Activated T-helper 2 cell treated with anti-CD3 and anti-CD28 coated beads, Interferon-gamma antibody, Interleukin-2, Interleukin-4, amounts not matched to agents 10 μg/mL and 5 μg/mL and 100 μg/mL, durations not matched to agents 14 hours and 24 hours and 36 hours (primary cell): ENCODE measurements at regions of chr19 and their contacts with region 1.

Region 1: DNA sequence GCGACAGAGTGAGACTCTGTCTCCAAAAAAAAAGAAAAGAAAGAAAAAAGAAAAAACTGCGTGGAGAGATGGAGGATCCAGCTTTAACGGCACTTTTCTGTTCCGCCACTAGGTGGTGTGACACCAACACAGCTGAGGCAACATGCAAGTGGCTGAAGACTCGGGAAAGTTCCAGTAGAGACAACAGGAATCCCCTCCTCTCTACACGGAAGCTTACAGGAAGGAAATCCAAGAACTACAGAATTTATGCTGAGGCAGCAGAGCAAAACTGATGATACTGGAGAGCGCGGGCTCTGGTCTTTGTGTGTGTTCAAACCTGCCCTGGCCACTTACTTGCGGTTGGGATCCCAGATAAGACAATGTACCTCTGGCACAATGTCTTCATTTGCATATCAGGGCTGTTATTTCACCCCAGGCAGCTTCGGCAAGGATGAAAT is 9.9 kb downstream of the RANBP3 start:
- DNase-seq: peak; percentile 47
- H3K4me3 Mint-ChIP-seq: no peak overlapping the region
- H3K27ac Mint-ChIP-seq: peak overlapping the region; percentile 89
- H3K4me1 Mint-ChIP-seq: peaks cover 47% of the 10 kb centered on the region
- H3K27me3 Mint-ChIP-seq: no peaks in the 10 kb centered on the region

Region 2: GRCh38 chr19:5803752-5804515 is 164.1 kb before region 1 on chr19:
- intact Hi-C with region 1: loop called (anchors 10 kb)
- DNase-seq: peak; percentile 93
- H3K4me3 Mint-ChIP-seq: peak overlapping the region; percentile 73
- H3K27ac Mint-ChIP-seq: peak overlapping the region; percentile 62
- H3K4me1 Mint-ChIP-seq: peaks cover 16% of the 10 kb centered on the region
- H3K27me3 Mint-ChIP-seq: peaks cover 21% of the 10 kb centered on the region

Region 3: DNA sequence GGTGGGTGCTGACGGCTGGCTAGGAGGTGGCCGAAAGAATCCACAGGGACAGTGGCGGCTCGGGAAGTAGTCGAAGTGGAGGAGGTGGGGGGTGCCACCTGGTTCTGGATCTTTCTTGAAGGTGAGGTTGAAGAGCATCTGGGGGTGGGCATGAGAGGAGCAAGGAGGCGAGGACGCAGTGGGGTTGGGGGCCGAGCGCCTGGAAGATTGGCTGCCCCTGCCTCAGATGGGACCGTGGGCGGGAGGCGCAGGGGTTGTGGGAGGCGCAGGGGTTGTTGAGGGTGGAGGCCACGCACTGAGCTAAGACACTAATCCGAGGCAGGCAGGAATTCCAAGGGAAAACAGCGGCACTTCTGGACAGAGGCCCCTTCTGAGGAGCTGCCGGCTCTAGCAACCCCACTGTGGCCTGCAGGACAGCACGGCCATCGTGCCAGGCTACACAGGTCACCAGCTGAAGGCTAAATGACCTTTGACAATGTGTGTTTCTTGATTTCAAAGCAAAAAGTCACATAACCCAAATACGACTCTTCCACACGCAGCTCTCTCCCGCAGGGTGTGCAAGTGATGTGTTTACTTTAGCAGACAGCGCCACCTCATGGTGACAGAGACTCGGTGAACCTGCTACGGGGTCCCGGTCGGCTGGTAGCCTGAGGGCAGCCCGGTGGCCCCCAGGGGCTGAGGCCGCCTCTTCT is 54.0 kb after region 1 on chr19:
- intact Hi-C with region 1: no loop called
- DNase-seq: peak; percentile 62
- H3K4me3 Mint-ChIP-seq: no peak overlapping the region
- H3K27ac Mint-ChIP-seq: no peak overlapping the region
- H3K4me1 Mint-ChIP-seq: peaks cover 3% of the 10 kb centered on the region
- H3K27me3 Mint-ChIP-seq: no peaks in the 10 kb centered on the region